Psoas muscle (tissue), 8 donors: ENCODE measurements at regions of chr7 and their contacts with region 1.

Region 1: DNA sequence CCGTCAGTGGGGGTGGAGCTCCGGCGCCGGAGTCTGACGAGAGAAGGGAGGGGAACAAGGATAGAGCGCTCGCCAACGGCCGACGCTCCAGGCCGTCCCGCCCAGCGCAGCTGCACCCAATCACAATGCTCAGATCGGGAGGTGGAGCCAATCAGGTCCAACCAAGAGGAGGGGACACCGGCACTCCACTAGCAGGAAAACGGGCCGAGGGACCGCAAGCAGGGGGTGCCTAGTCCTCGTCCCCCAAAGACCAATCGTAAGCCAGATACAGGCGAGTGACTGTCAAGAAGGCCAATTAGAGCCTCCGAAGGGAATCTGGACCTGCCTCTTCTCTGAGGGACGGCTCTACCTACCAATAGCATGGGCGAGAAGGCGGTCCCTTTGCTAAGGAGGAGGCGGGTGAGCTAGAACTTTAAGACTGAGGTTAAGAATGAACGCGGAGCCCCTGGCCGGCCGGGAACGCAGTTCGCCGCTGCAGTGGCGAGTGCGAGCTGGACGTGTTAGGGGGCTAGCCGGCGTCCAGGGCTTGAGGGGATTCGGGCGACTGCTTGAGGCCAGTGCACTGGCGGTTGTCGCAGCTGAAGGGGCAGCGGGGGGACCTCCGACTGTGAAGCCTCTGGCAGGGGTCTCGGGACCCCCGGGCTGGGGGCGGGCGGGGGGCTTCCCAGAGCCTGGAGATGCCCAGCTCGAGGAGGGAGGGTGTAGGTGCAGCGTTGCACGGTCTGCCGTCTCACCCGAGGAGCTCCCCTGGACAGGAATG is at the start of gene FBXO24:
- DNase-seq: peak; percentile 100
- ATAC-seq: peak; percentile 92 to 94 (median 94)
- H3K4me3 ChIP-seq: peak within 1 kb of the TSS; percentile 100
- H3K27ac ChIP-seq: peak within 1 kb of the TSS; percentile 97
- H3K4me1 ChIP-seq: peaks cover 20% of the 10 kb centered on the region
- H3K27me3 ChIP-seq: no peaks in the 10 kb centered on the region
- CTCF ChIP-seq: no peak
- total RNA-seq, gene FBXO24: 0.13 to 1.1 (median 0.31) TPM

Region 2: DNA sequence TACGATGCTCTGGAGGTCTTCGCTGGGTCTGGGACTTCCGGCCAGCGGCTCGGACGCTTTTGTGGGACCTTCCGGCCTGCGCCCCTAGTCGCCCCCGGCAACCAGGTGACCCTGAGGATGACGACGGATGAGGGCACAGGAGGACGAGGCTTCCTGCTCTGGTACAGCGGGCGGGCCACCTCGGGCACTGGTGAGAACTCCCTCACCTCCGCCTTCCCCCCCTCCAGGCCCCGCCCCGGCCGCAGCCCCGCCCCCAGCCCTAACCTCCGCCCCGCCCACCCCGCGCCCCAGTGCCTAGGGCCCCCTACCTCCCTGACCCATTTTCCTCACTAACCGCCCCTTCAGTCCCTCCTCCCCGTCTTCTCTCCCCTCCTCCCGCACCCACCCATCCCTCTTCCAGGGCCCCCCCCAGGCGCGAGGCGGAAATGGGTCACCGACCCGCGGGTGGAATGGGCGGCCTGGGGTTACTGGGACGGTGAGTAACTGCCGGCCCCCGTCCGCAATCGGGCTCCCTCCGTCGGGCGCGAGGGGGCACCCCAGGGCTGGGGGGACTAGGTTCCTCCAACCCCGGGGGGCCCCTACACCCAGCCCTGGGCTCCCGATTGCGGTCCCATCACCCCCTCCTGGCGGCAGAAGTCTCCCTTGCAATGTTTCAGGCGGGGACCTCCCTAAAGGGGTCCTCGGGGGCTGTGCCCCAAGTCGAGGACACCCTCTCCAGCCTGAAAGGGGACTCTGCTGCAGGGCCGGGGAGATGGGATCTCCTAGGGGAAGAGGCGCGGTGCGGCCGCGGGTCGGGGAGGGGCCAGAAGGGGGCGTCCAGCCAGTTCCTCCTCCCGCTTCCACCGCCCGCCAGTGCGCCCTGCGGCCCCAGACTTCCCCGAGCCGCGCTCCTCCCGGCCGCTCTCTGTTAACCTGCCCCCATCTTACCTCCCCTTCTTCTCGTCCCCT is 17.9 kb after region 1 on chr7:
- intact Hi-C with region 1: loop called in 1 of 2 experiments (anchors 2 kb)
- DNase-seq: peak; percentile 77 to 86
- ATAC-seq: peak; percentile 70 to 90 (median 78)
- H3K4me3 ChIP-seq: peak overlapping the region; percentile 80
- H3K27ac ChIP-seq: no peak overlapping the region
- H3K4me1 ChIP-seq: peaks cover 5% of the 10 kb centered on the region
- H3K27me3 ChIP-seq: peaks cover 0 to 8% (median 3%) of the 10 kb centered on the region in 3 donors
- CTCF ChIP-seq: peak; percentile 18

Region 3: DNA sequence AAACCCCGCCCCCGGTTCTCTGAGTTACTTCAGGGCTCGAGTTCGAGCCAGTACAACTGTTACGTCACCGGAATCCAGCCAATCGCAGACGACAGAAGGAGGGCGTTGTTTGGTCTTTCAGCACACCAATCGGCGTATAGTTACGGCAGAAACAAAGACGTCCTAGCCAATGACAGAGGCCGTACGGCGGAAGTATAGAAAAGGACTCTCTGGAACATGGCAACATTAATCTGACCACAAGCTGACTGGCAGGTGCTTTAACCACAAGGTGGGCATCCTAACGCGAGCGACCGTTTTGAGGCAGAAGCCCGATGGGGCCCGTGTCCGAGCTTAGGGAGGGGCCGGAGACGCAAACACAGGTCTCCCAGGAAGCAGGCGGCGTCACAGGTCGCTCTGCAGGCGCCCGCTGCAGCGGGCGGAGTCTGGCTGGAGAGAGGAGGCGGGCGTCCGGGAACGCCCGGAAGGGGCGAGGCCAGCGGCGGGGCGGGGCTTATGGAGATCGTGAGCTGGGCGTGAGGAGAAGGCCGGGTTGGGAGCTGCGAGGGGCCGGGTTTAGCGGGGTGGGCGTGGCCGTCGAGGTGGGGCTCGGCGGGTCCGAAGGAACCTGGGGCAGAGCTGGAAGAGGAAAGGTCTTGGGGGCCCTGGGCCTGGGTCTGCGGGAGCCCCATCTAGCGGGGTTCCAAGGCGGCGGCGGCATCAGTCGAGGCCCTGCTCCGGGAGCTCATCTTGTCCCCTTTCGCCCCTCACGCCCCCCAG is 25.7 kb after region 1 on chr7 and contains the start of gene MOSPD3:
- intact Hi-C with region 1: loop called in 1 of 2 experiments (anchors 1 kb)
- DNase-seq: peak; percentile 98 to 99
- ATAC-seq: peak; percentile 96 to 99 (median 97)
- H3K4me3 ChIP-seq: peak within 1 kb of the TSS; percentile 88
- H3K27ac ChIP-seq: peak within 1 kb of the TSS; percentile 99
- H3K4me1 ChIP-seq: no peaks in the 10 kb centered on the region
- H3K27me3 ChIP-seq: no peaks in the 10 kb centered on the region
- CTCF ChIP-seq: no peak
- total RNA-seq, gene MOSPD3: 6.2 to 7.0 (median 6.4) TPM

Region 4: GRCh38 chr7:100673300-100673941 is 87.0 kb after region 1 on chr7 and contains the start of gene GNB2:
- intact Hi-C with region 1: loop called (anchors 1 to 5 kb)
- DNase-seq: peak; percentile 99 to 100
- ATAC-seq: peak; percentile 89 to 94 (median 92)
- H3K4me3 ChIP-seq: peak within 1 kb of the TSS; percentile 92
- H3K27ac ChIP-seq: peak within 1 kb of the TSS; percentile 97
- H3K4me1 ChIP-seq: no peaks in the 10 kb centered on the region
- H3K27me3 ChIP-seq: no peaks in the 10 kb centered on the region
- CTCF ChIP-seq: no peak
- total RNA-seq, gene GNB2: 87.1 to 130 (median 121) TPM

Region 5: DNA sequence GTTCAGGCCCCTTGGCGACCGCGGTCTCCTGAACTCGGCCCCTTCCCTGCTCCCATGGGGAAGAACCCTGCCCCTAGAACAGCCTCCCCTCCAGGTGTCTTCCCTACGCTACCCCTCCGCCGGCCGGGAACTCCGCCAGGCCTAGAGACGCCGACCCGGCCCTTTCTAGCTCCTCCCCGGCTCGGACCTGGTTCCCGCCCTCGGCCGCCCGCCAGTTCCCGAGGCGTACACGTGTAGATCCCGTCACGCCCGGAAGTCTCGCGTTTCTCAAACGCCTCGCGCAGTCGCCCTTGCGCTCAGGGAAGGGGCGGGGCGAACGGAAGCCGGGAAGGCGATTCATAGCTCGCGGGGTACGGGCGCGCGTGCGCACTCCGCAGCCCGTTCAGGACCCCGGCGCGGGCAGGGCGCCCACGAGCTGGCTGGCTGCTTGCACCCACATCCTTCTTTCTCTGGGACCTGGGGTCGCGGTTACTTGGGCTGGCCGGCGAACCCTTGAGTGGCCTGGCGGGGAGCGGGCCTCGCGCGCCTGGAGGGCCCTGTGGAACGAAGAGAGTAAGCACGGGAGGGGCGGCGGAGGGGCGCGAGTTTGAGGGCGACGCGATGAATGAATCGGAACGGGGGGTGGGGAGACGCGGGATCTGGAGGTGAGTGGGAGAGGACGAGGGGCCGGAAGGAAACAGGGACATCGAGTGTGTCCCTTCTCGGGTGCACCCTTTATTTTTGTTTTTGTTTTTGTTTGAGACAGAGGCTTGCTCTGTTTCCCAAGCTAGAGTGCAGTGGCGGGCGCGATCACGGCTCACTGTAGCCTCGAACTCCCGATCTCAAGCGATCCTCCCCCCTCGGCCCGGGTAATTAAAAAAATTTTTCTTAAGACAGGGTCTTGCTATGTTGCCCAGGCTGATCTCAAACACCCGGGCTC is 119.6 kb after region 1 on chr7 and contains the start of gene POP7:
- intact Hi-C with region 1: no loop called
- DNase-seq: peak; percentile 99 to 100
- ATAC-seq: peak; percentile 99
- H3K4me3 ChIP-seq: peak within 1 kb of the TSS; percentile 80
- H3K27ac ChIP-seq: peak within 1 kb of the TSS; percentile 89
- H3K4me1 ChIP-seq: peaks cover 13% of the 10 kb centered on the region
- H3K27me3 ChIP-seq: no peaks in the 10 kb centered on the region
- CTCF ChIP-seq: no peak
- total RNA-seq, gene POP7: 28.4 to 44.4 (median 39.4) TPM